ENCODE measurements at regions of chr18 and their contacts with region 1.

Region 1: GRCh38 chr18:61093965-61094364 is 239.3 kb upstream of the CDH20 start:
- DNase-seq: no peak
- H3K4me3 ChIP-seq: no peak overlapping the region
- H3K27ac ChIP-seq: no peak overlapping the region
- H3K4me1 ChIP-seq: no peaks in the 10 kb centered on the region
- H3K27me3 ChIP-seq: peaks cover 0 to 5% of the 10 kb centered on the region in 2 donors
- CTCF ChIP-seq: no peak
- POLR2A ChIP-seq: no peak

Region 2: GRCh38 chr18:61034580-61034979 is 59.4 kb before region 1 on chr18:
- intact Hi-C with region 1: loop called (anchors 5 kb)
- DNase-seq: no peak
- H3K4me3 ChIP-seq: no peak overlapping the region
- H3K27ac ChIP-seq: no peak overlapping the region
- H3K4me1 ChIP-seq: no peaks in the 10 kb centered on the region
- H3K27me3 ChIP-seq: no peaks in the 10 kb centered on the region
- CTCF ChIP-seq: no peak
- POLR2A ChIP-seq: no peak

Measured in breast epithelium (tissue), 4 donors.